Endothelial cell of umbilical vein (primary cell): ENCODE measurements at regions of chr17 and their contacts with region 1.

Region 1: DNA sequence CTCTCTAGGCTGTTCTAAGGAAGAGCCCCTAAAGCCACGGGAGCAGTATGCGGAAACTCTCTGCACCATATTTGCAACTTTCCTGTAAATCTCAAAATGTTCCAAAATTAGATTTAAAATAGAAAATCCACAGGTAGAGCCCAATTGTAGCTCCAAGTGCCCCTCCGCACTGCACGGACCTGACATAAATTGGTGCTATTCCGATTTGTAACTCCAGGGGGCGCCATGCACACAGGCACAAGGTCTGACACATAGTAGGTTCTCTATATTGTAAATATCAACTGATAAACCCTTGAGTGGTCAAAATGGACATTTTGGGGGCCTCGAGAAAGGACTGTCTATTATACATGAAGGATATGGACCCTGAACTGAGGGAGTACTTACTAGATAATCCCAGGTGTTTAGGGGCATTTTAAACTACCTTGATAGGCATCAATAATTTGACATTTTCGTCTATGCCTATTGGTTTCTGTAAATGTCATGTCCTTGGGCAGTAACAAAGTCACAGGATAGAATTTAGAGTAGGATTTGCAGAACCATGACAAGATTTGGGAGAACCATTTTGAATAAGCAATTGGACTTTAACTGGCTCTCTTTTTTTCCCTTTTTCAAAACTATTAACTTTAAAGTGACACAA is 36.6 kb upstream of the TMEM132E start:
- DNase-seq: peak; percentile 25
- H3K4me3 ChIP-seq: no peak overlapping the region
- H3K27ac ChIP-seq: no peak overlapping the region
- H3K4me1 ChIP-seq: no peaks in the 10 kb centered on the region
- H3K27me3 ChIP-seq: no peaks in the 10 kb centered on the region
- CTCF ChIP-seq: peak; percentile 71 to 82
- POLR2A ChIP-seq: no peak

Region 2: DNA sequence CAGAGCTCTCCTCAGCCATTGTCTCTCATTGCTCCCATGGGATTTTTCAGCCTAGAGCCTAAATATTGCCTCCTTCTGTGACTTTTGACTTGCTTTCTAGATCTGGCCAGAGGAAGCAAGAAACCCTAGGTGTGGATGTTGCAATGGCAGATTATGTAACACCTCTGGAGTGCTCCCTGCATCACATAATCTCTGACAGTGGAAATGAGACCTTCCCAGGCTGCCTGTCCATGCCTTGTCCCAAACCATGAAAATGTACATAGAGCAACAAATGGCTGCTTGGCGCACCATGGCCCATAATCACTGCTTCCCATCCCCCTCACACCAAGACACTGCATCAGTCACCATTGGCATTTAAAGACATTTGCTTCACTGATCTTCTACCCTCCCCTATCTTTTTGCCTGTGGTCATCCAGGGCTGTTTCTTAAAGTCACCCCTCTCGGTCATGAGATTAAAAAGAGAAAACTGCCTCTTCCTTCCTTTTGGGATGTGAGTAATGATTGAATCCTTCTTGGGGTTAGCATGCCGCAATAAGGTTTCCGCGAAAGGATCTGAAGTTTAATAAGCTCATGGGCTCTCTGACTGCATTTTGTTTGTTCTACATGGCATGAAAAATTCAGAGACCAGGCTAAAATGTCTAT is 321.9 kb before region 1 on chr17:
- CTCF ChIA-PET with region 1: no interaction called
- POLR2A ChIA-PET with region 1: no interaction called
- dilution Hi-C with region 1: no loop called
- intact Hi-C with region 1: no loop called
- DNase-seq: no peak
- H3K4me3 ChIP-seq: no peak overlapping the region
- H3K27ac ChIP-seq: no peak overlapping the region
- H3K4me1 ChIP-seq: peaks cover 4% of the 10 kb centered on the region
- H3K27me3 ChIP-seq: peaks cover 12% of the 10 kb centered on the region in 2 experiments
- CTCF ChIP-seq: no peak
- POLR2A ChIP-seq: no peak

Region 3: GRCh38 chr17:34519282-34519681 is 23.5 kb before region 1 on chr17:
- CTCF ChIA-PET with region 1: interaction called, 10 read pairs
- POLR2A ChIA-PET with region 1: no interaction called
- dilution Hi-C with region 1: no loop called
- intact Hi-C with region 1: no loop called
- DNase-seq: peak; percentile 2
- H3K4me3 ChIP-seq: no peak overlapping the region
- H3K27ac ChIP-seq: no peak overlapping the region
- H3K4me1 ChIP-seq: no peaks in the 10 kb centered on the region
- H3K27me3 ChIP-seq: no peaks in the 10 kb centered on the region
- CTCF ChIP-seq: peak; percentile 43 to 59
- POLR2A ChIP-seq: no peak

Region 4: GRCh38 chr17:34556384-34556783 is 13.6 kb after region 1 on chr17:
- CTCF ChIA-PET with region 1: interaction called, 41 read pairs
- POLR2A ChIA-PET with region 1: no interaction called
- dilution Hi-C with region 1: no loop called
- intact Hi-C with region 1: no loop called
- DNase-seq: no peak
- H3K4me3 ChIP-seq: no peak overlapping the region
- H3K27ac ChIP-seq: no peak overlapping the region
- H3K4me1 ChIP-seq: no peaks in the 10 kb centered on the region
- H3K27me3 ChIP-seq: no peaks in the 10 kb centered on the region
- CTCF ChIP-seq: no peak
- POLR2A ChIP-seq: no peak

Region 5: DNA sequence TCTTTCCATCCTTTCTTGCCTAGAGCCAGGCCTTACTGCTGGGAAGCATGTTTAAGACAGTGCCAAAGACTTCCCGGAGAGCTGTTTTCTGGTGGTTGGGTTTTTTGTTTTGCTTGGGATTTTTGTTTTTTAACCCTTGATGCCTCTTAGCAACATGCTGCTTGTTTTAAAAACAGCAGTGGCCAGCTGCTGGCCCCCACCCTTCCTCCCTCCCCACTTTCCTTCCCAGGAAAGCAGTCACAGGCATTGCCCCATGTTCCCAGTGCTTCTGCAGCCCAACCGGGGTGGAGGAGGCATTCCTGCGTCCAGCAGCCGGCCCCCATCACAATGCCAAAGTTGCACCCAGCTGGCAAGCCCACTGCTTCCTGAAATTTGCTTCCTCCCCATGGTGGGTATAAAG is 49.2 kb after region 1 on chr17:
- CTCF ChIA-PET with region 1: no interaction called
- POLR2A ChIA-PET with region 1: no interaction called
- dilution Hi-C with region 1: no loop called
- intact Hi-C with region 1: no loop called
- DNase-seq: no peak
- H3K4me3 ChIP-seq: no peak overlapping the region
- H3K27ac ChIP-seq: no peak overlapping the region
- H3K4me1 ChIP-seq: no peaks in the 10 kb centered on the region
- H3K27me3 ChIP-seq: peaks cover 0 to 4% of the 10 kb centered on the region in 2 experiments
- CTCF ChIP-seq: no peak
- POLR2A ChIP-seq: no peak

Region 6: DNA sequence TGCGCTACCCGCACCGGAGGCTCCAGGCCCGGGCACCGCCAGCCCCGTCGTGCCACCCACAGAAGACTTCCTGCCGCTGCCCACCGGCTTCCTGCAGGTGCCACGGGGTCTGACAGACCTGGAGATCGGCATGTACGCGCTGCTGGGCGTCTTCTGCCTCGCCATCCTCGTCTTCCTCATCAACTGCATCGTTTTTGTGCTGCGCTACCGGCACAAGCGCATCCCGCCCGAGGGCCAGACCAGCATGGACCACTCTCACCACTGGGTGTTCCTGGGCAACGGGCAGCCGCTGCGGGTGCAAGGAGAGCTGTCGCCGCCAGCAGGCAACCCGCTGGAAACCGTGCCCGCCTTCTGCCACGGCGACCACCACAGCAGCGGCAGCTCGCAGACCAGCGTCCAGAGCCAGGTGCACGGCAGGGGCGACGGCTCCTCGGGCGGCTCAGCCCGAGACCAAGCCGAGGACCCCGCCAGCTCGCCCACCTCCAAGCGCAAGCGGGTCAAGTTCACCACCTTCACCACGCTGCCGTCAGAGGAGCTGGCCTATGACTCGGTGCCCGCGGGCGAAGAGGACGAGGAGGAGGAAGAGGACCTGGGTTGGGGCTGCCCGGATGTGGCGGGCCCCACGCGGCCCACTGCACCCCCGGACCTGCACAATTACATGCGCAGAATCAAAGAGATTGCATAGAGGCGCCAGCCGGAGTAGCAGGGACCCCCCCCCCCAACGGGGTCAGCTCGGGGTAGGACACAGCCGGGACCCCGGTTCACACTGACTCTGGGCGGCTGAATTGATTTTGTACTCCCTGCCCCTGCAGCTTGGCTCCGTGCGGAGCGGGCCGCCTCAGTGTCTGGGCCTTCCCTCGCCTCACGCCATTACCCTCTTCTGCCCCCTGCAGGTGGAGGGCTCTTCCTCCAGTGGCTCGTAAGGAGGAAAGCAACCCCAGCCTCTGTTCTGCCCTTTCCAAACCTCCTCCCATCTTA is 95.0 kb after region 1 on chr17:
- CTCF ChIA-PET with region 1: interaction called, 39 read pairs
- POLR2A ChIA-PET with region 1: no interaction called
- dilution Hi-C with region 1: no loop called
- intact Hi-C with region 1: loop called (anchors 1 kb)
- DNase-seq: peak; percentile 68
- H3K4me3 ChIP-seq: no peak overlapping the region
- H3K27ac ChIP-seq: no peak overlapping the region
- H3K4me1 ChIP-seq: peaks cover 3% of the 10 kb centered on the region
- H3K27me3 ChIP-seq: peaks cover 2 to 9% of the 10 kb centered on the region in 2 experiments
- CTCF ChIP-seq: peak; percentile 72 to 97
- POLR2A ChIP-seq: no peak

Region 7: GRCh38 chr17:34892461-34893249 is 349.8 kb after region 1 on chr17:
- CTCF ChIA-PET with region 1: interaction called, 10 read pairs
- POLR2A ChIA-PET with region 1: no interaction called
- dilution Hi-C with region 1: no loop called
- intact Hi-C with region 1: loop called (anchors 1 kb)
- DNase-seq: no peak
- H3K4me3 ChIP-seq: no peak overlapping the region
- H3K27ac ChIP-seq: no peak overlapping the region
- H3K4me1 ChIP-seq: no peaks in the 10 kb centered on the region
- H3K27me3 ChIP-seq: no peaks in the 10 kb centered on the region
- CTCF ChIP-seq: peak; percentile 22 to 36
- POLR2A ChIP-seq: no peak

Region 8: GRCh38 chr17:34980681-34981537 is 438.1 kb after region 1 on chr17:
- CTCF ChIA-PET with region 1: interaction called, 10 read pairs
- POLR2A ChIA-PET with region 1: no interaction called
- dilution Hi-C with region 1: no loop called
- intact Hi-C with region 1: loop called (anchors 10 kb)
- DNase-seq: peak; percentile 80
- H3K4me3 ChIP-seq: peak overlapping the region; percentile 65 to 92 (median 89)
- H3K27ac ChIP-seq: peak overlapping the region; percentile 96
- H3K4me1 ChIP-seq: peaks cover 19% of the 10 kb centered on the region
- H3K27me3 ChIP-seq: no peaks in the 10 kb centered on the region
- CTCF ChIP-seq: peak in 1 of 2 donors; percentile 51
- POLR2A ChIP-seq: peak; percentile 80